AG04450 (cell line): ENCODE measurements at regions of chrX and their contacts with region 1.

Region 1: GRCh38 chrX:120664081-120664480 is 34.2 kb upstream of the C1GALT1C1 start:
- DNase-seq: no peak
- H3K4me3 ChIP-seq: no peak overlapping the region
- H3K27ac ChIP-seq: no peak overlapping the region
- H3K27me3 ChIP-seq: no peaks in the 10 kb centered on the region
- CTCF ChIP-seq: no peak; the same call in 1 of the 2 replicates

Region 2: GRCh38 chrX:120499301-120500072 is 164.6 kb before region 1 on chrX:
- CTCF ChIA-PET with region 1: interaction called, 31 read pairs
- POLR2A ChIA-PET with region 1: no interaction called
- DNase-seq: no peak
- H3K4me3 ChIP-seq: no peak overlapping the region
- H3K27ac ChIP-seq: no peak overlapping the region
- H3K27me3 ChIP-seq: no peaks in the 10 kb centered on the region
- CTCF ChIP-seq: no peak

Region 3: DNA sequence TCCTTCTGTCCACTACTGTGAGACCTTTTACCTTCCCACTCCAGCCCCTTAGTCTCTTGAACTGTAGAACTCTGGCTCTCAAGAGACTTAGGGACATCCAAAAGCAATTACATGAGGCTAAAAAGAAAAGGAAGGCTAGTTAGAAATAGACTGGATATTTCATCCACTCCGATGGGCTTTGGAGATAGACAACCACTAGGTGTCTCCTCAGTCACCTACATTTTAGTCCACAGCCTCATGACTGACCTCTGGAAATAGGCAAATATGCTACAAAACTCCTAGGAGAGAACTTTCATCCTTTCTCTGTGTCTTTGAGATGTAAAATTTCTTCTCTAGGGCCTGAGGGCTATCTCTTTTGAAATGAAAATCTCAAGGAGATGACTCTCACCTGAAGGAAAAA is 149.8 kb before region 1 on chrX:
- CTCF ChIA-PET with region 1: interaction called, 14 read pairs
- POLR2A ChIA-PET with region 1: no interaction called
- DNase-seq: no peak
- H3K4me3 ChIP-seq: no peak overlapping the region
- H3K27ac ChIP-seq: no peak overlapping the region
- H3K27me3 ChIP-seq: no peaks in the 10 kb centered on the region
- CTCF ChIP-seq: peak; percentile 37

Region 4: GRCh38 chrX:120642856-120643255 is 21.2 kb before region 1 on chrX:
- CTCF ChIA-PET with region 1: no interaction called
- POLR2A ChIA-PET with region 1: no interaction called
- DNase-seq: no peak
- H3K4me3 ChIP-seq: no peak overlapping the region
- H3K27ac ChIP-seq: no peak overlapping the region
- H3K27me3 ChIP-seq: no peaks in the 10 kb centered on the region
- CTCF ChIP-seq: no peak